ENCODE measurements at regions of chr6 and their contacts with region 1.

Region 1: DNA sequence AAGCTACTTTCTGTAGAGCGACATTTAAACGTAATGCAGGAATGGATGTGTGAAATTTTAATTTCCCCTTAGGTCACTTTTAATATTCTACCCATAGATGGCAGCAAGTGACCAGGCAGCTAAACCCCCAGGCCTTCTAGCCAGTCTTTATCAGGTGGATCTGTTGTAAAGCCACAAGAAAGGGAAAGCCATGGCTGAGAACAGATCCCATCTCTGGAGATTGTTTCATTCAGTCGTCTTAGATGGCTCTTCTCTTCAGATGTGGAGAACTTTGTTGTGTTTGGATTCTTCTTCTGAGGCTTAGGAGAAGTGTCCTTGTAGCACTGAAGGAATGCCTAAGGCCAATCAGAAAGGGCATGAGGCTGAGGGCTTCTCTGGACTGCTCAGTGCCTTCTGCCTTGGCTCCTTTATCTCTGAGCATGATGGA is 15.8 kb upstream of the RNF182 start:
- DNase-seq: peak; percentile 80
- H3K4me3 Mint-ChIP-seq: no peak overlapping the region
- H3K27ac Mint-ChIP-seq: no peak overlapping the region
- H3K4me1 Mint-ChIP-seq: peaks cover 6% of the 10 kb centered on the region
- H3K27me3 Mint-ChIP-seq: peaks cover 45% of the 10 kb centered on the region

Region 2: DNA sequence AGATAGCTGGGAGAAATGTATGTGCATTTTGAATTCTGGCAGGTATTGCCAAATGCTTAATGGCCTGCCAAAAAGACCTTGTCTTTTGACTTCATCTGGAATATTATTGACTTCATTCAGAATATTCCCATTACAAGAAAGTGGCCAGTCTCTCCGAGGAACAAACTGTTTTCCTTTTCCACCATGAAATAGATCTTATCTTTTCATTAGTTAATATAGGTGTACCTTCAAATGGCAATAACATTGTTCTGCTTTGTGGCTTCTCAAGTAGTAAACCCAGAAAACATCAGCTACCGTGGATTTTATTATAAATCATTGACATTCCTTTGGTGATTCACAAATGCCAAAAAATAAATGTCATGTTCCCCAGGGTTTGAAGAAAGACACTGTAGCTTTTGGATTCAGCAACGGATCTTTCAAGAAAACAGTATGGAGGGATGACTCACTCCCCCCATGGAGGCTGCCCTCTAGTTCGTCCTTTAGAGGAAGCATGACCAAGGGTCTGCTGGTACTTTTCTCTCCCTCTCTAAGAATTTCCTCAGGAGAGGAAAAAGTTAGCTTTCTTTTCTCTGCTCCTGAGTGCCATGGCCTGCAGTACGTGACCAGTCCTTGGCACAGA is 14.7 kb after region 1 on chr6:
- intact Hi-C with region 1: no loop called
- DNase-seq: no peak
- H3K4me3 Mint-ChIP-seq: peak overlapping the region; percentile 84
- H3K27ac Mint-ChIP-seq: no peak overlapping the region
- H3K4me1 Mint-ChIP-seq: peaks cover 13% of the 10 kb centered on the region
- H3K27me3 Mint-ChIP-seq: peaks cover 68% of the 10 kb centered on the region

Region 3: DNA sequence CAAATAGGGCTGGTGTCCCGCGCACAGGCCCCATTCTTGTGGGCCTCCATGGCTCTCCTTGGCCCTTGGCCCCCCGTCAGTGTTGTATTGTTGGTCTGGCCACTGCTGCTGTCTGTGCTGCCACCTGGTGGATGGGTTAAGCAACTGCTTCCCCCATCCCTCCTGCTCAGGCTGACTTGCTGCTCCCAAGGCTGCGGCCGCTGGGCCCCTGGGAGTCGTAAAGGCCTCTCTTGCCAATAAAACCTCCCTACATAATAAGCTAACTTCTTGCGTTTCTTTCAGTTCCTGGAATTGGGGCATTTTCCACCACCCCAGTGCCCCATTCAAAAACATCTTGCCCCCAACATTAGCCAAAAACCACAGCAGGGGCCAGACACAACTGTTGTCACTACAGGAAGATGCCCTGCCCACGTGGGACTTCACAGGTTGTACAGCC is 235.7 kb after region 1 on chr6:
- intact Hi-C with region 1: loop called (anchors 1 kb)
- DNase-seq: peak; percentile 91
- H3K4me3 Mint-ChIP-seq: no peak overlapping the region
- H3K27ac Mint-ChIP-seq: no peak overlapping the region
- H3K4me1 Mint-ChIP-seq: peaks cover 6% of the 10 kb centered on the region
- H3K27me3 Mint-ChIP-seq: no peaks in the 10 kb centered on the region

Measured in activated CD4-positive, alpha-beta T cell treated with anti-CD3 and anti-CD28 coated beads, Interleukin-2, amount 10 ng/mL, durations not matched to agents 24 days and 14 days (primary cell).